ENCODE measurements at regions of chr21 and their contacts with region 1.

Region 1: GRCh38 chr21:45880097-45881068 is 101.2 kb upstream of the COL6A1 start:
- DNase-seq: no peak
- H3K4me3 ChIP-seq: no peak overlapping the region
- CTCF ChIP-seq: peak; percentile 68

Region 2: GRCh38 chr21:45723049-45723958 is 157.1 kb before region 1 on chr21:
- CTCF ChIA-PET with region 1: no interaction called
- POLR2A ChIA-PET with region 1: no interaction called
- DNase-seq: no peak
- H3K4me3 ChIP-seq: no peak overlapping the region
- CTCF ChIP-seq: no peak

Region 3: GRCh38 chr21:45768751-45769070 is 111.7 kb before region 1 on chr21:
- CTCF ChIA-PET with region 1: no interaction called
- POLR2A ChIA-PET with region 1: no interaction called
- DNase-seq: no peak
- H3K4me3 ChIP-seq: no peak overlapping the region; the same call in 1 of the 2 replicates
- CTCF ChIP-seq: peak; percentile 9

Region 4: GRCh38 chr21:45836268-45836655 is 44.1 kb before region 1 on chr21:
- CTCF ChIA-PET with region 1: interaction called, 13 read pairs
- POLR2A ChIA-PET with region 1: no interaction called
- DNase-seq: no peak
- H3K4me3 ChIP-seq: no peak overlapping the region
- CTCF ChIP-seq: no peak

Region 5: DNA sequence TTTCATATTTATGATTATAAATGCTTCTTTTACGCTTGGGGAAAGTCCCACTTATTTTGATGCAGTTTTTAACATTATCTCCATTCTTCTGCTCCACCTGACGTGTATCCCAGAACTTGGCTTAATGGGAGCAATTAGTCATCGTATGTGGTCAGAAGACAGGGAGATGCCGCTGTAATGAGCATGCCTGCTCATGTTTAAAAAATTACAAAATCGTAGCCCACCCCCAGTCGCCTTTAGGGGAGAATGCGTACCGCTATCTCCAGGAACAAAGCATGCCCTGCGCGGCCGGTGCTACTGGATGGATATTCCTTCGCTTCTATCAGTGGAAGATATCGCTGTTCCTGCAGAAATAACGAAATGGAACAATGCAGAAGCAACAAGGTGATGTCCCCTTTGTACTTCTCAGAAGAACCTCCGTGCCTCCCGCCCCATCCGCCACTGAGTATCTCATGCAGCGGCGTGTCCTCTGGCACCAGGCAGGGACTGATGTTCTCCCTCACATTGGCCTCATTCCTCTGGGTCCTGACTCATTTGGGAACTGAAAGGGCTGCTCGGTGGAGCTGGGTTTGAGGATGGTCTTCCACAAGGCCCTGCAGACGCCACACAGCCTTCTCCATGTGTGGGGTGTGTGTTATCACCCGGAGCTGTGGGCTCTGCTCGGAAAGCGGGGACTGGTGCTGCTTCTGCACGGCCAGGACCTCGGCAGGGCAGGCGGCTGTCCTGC is 15.1 kb before region 1 on chr21:
- CTCF ChIA-PET with region 1: interaction called, 27 read pairs
- POLR2A ChIA-PET with region 1: interaction called, 4 read pairs
- DNase-seq: peak; percentile 80
- H3K4me3 ChIP-seq: no peak overlapping the region
- CTCF ChIP-seq: no peak

Region 6: GRCh38 chr21:45923146-45923545 is 42.8 kb after region 1 on chr21:
- CTCF ChIA-PET with region 1: interaction called, 16 read pairs
- POLR2A ChIA-PET with region 1: no interaction called
- DNase-seq: peak; percentile 1
- H3K4me3 ChIP-seq: no peak overlapping the region
- CTCF ChIP-seq: peak; percentile 95